ENCODE measurements at regions of chr19 and their contacts with region 1.

Region 1: DNA sequence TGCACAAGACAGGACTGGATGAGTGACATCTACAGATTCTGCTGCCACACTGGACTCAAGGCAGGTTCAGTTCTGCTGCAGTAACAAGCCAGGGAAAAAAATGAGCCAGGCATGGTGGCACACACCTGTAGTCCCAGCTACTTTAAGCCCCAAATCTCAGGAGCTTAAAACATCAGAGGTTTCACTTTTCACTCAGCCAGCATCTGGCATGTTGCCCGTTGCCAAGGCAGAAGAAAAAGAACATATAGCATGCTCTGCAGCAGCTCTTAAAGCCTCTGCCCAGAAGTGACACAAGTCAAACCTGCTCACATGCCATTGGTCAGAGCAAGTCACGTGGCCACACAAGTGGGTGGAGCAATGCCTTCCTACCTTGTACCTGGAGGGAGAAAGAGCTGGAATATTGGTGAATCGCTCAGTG is 14.7 kb upstream of the ADGRE5 start:
- DNase-seq: peak; percentile 77 to 88 (median 84)
- ATAC-seq: peak; percentile 69
- H3K4me3 ChIP-seq: no peak overlapping the region
- H3K27ac ChIP-seq: 0 out of 3 replicates have a peak overlapping the region, but pooled peaks have one; percentile 39
- H3K4me1 ChIP-seq: peaks cover 44 to 53% of the 10 kb centered on the region in 2 experiments
- H3K27me3 ChIP-seq: no peaks in the 10 kb centered on the region
- CTCF ChIP-seq: no peak
- EP300 ChIP-seq: no peak
- POLR2A ChIP-seq: no peak
- RAD21 ChIP-seq: no peak

Region 2: DNA sequence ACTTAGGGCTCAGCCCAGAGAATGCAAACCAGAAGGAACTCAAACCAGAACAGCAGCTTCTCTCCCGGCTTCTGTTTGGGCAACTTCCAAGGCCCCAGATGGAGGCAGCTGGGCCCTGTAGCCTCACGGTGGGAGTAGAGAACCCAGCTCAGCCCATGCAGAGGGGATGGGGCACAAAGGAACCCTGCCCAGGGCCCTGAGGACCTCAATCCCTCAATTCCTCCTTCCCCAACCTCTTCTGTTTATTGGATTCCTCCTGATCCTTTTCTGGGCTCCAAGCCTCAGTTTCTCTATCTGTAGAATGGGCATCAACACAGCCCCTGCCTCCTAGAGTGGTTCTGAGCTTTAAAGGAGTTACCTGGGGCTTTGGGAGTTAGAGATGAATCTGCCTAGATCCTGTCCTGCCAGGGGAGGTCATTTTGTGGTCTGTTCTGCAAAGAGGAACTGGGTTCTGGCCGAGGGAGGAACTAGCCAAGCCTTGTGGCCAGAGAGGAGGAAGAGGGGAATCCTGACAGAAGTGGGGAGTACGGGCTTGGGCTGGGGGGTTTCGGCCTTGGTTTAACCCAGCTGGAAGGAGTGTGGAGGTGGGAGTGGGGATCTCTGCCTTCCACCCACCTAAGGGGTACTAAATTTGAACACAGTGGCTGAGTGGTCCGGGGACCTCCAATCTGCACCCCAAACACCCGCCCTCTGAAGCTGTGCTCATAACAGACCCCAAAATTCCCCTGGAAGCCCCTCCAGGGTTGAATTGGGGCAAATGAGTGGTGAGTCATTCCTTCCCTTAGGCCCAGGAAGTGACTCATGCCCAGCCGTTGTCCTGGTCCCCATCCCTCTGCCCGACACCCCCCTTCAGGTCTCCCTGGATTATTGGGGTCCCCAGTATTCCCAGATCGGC is 17.4 kb after region 1 on chr19:
- CTCF ChIA-PET with region 1: interaction called, 3 read pairs
- POLR2A ChIA-PET with region 1: interaction called, 27 read pairs
- in situ Hi-C with region 1: no loop called
- intact Hi-C with region 1: loop called (anchors 2 kb)
- DNase-seq: peak; percentile 63 to 80 (median 68)
- ATAC-seq: peak; percentile 48
- H3K4me3 ChIP-seq: peak overlapping the region; percentile 64
- H3K27ac ChIP-seq: peak overlapping the region; percentile 91
- H3K4me1 ChIP-seq: peaks cover 26 to 54% of the 10 kb centered on the region in 2 experiments
- H3K27me3 ChIP-seq: no peaks in the 10 kb centered on the region
- CTCF ChIP-seq: no peak
- EP300 ChIP-seq: peak; percentile 75; the same call in 1 of the 2 replicates
- POLR2A ChIP-seq: no peak
- RAD21 ChIP-seq: no peak

Region 3: GRCh38 chr19:14661372-14661924 is 294.9 kb after region 1 on chr19:
- CTCF ChIA-PET with region 1: no interaction called
- POLR2A ChIA-PET with region 1: no interaction called
- in situ Hi-C with region 1: no loop called
- intact Hi-C with region 1: no loop called
- DNase-seq: no peak
- ATAC-seq: no peak
- H3K4me3 ChIP-seq: no peak overlapping the region
- H3K27ac ChIP-seq: no peak overlapping the region
- H3K4me1 ChIP-seq: no peaks in the 10 kb centered on the region
- H3K27me3 ChIP-seq: peaks cover 18 to 21% of the 10 kb centered on the region in 2 experiments
- CTCF ChIP-seq: no peak
- EP300 ChIP-seq: no peak
- POLR2A ChIP-seq: no peak
- RAD21 ChIP-seq: no peak

Measured in K562 (cell line).